ENCODE measurements at regions of chr5 and their contacts with region 1.

Region 1: GRCh38 chr5:10825897-10826644 is 65.0 kb upstream of the DAP start:
- DNase-seq: peak in 1 of 2 experiments; percentile 54
- H3K4me3 ChIP-seq: no peak overlapping the region
- H3K27ac ChIP-seq: no peak overlapping the region
- H3K4me1 ChIP-seq: no peaks in the 10 kb centered on the region
- H3K27me3 ChIP-seq: no peaks in the 10 kb centered on the region
- CTCF ChIP-seq: peak in 2 of 3 experiments; percentile 60 to 65; a peak in 3 of 4 replicates
- EP300 ChIP-seq: no peak
- POLR2A ChIP-seq: no peak
- RAD21 ChIP-seq: peak; percentile 38 to 54

Region 2: GRCh38 chr5:10467240-10468198 is 358.6 kb before region 1 on chr5:
- CTCF ChIA-PET with region 1: no interaction called
- POLR2A ChIA-PET with region 1: no interaction called
- DNase-seq: no peak
- H3K4me3 ChIP-seq: no peak overlapping the region
- H3K27ac ChIP-seq: 0 out of 2 replicates have a peak overlapping the region, but pooled peaks have one; percentile 1
- H3K4me1 ChIP-seq: peaks cover 5 to 12% (median 8%) of the 10 kb centered on the region in 4 experiments
- H3K27me3 ChIP-seq: no peaks in the 10 kb centered on the region
- CTCF ChIP-seq: no peak
- EP300 ChIP-seq: no peak
- POLR2A ChIP-seq: no peak
- RAD21 ChIP-seq: no peak

Region 3: DNA sequence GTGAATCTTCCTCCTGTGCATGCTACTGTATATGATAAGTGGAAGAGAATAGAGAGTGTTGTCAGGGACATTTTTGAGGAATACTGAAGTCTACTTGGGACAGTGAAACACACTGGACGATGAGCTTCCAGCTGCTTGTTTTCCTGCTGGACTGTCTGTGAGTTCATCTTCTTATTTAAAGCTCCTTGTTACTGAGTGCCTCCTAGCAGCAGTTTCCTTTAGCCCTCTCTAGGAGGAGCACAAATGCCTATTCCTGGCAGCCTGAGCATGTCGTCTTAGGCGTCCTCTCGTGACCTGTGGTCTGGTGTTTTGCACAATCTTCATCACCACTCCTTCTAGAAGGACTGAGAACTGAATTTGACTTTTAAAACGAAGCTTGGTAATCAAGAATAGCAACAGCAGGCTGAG is 218.4 kb before region 1 on chr5:
- CTCF ChIA-PET with region 1: no interaction called
- POLR2A ChIA-PET with region 1: no interaction called
- DNase-seq: no peak
- H3K4me3 ChIP-seq: no peak overlapping the region; a peak in 1 of 8 replicates
- H3K27ac ChIP-seq: no peak overlapping the region
- H3K4me1 ChIP-seq: peaks cover 4 to 31% (median 15%) of the 10 kb centered on the region in 4 experiments; a peak in 6 of 7 replicates
- H3K27me3 ChIP-seq: no peaks in the 10 kb centered on the region
- CTCF ChIP-seq: peak in 2 of 3 experiments; percentile 7 to 35; a peak in 2 of 4 replicates
- EP300 ChIP-seq: no peak
- POLR2A ChIP-seq: no peak
- RAD21 ChIP-seq: peak in 1 of 2 experiments; percentile 37; a peak in 3 of 4 replicates

Region 4: GRCh38 chr5:10838038-10838437 is 12.0 kb after region 1 on chr5:
- CTCF ChIA-PET with region 1: interaction called, 24 read pairs
- POLR2A ChIA-PET with region 1: interaction called, 3 read pairs
- DNase-seq: no peak
- H3K4me3 ChIP-seq: no peak overlapping the region
- H3K27ac ChIP-seq: no peak overlapping the region
- H3K4me1 ChIP-seq: no peaks in the 10 kb centered on the region; a peak in 1 of 7 replicates
- H3K27me3 ChIP-seq: no peaks in the 10 kb centered on the region
- CTCF ChIP-seq: no peak
- EP300 ChIP-seq: no peak
- POLR2A ChIP-seq: no peak
- RAD21 ChIP-seq: no peak

Measured in H1 (cell line).